ENCODE measurements at regions of chr12 and their contacts with region 1.

Region 1: DNA sequence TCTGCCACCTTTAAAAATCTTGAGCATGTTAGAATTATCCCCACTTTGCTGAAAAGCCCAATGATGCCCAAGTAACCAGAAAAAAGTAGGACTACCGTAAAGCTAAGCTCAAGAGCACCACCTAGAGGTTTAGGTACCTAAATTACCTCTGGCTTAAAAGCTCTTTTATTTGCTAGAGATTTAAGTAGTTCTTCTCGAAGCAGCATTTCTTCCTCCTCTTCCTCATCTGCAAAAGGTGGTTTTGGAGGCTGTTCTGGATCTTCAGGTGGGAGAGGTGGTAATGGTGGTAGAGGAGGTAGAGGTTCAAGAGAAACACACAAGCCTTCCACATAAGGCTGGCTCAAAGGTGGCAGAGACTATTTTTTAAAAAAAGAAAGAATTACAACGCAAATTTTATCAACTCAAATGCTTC is 26.9 kb downstream of the ZFC3H1 start:
- DNase-seq: peak in 5 of 35 experiments; percentile 6 to 78 (median 24)
- ATAC-seq: peak in 3 of 4 experiments; percentile 57 to 65 (median 58)
- H3K4me3 ChIP-seq: no peak overlapping the region
- H3K4me3 Mint-ChIP-seq: peak overlapping the region in 1 of 3 donors; percentile 10
- H3K27ac ChIP-seq: no peak overlapping the region
- H3K27ac Mint-ChIP-seq: peak overlapping the region; percentile 47 to 66
- H3K4me1 ChIP-seq: no peaks in the 10 kb centered on the region
- H3K4me1 Mint-ChIP-seq: peaks cover 10 to 14% (median 12%) of the 10 kb centered on the region in 3 donors
- H3K27me3 ChIP-seq: no peaks in the 10 kb centered on the region
- H3K27me3 Mint-ChIP-seq: no peaks in the 10 kb centered on the region

Region 2: DNA sequence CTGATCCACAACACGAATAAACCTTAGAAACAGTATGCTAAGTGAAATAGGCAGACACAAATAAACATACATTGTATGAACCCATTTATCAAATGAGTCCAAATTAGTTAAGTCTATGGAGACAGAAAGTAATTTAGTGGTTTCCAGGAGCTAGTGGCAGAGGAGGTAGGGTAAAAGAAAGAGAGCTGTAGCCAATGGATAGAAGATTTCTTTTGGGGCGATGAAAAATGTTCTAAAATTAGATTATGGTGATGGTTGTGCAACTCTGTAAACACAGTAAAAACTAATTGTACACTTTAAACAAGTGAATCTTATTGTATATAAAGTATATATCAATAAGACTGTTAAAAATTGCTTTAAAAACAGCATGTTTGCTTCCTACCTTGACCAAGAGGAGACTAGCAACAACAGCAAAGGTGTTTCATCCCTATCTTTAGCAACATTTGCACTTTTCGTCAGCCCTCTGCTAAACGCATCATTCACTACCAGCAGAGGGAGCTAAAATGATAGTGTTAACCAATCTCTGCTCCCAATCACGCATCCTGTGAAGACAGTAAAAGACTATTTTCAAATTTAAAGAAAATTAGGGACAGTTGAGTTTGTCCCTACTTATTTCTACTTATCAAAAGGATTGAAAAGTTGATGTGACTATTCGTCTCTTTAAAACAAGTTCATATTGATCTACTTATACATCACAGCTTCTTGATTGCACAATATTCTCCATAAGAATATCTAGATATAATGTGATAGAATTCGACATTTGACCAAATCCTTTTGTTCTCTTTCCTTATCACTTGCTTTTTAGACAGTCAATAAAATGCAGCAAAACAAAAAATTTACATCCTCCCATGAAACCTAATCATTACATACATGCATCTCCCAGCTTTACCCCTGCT is 221.1 kb before region 1 on chr12:
- CTCF ChIA-PET with region 1: interaction called in 1 of 2 experiments, 25 read pairs
- POLR2A ChIA-PET with region 1: no interaction called
- DNase-seq: peak in 5 of 35 experiments; percentile 10 to 70 (median 15)
- ATAC-seq: peak; percentile 52 to 70 (median 60)
- H3K4me3 ChIP-seq: no peak overlapping the region
- H3K4me3 Mint-ChIP-seq: no peak overlapping the region
- H3K27ac ChIP-seq: no peak overlapping the region
- H3K27ac Mint-ChIP-seq: no peak overlapping the region
- H3K4me1 ChIP-seq: no peaks in the 10 kb centered on the region
- H3K4me1 Mint-ChIP-seq: no peaks in the 10 kb centered on the region
- H3K27me3 ChIP-seq: no peaks in the 10 kb centered on the region
- H3K27me3 Mint-ChIP-seq: peaks cover 4 to 6% of the 10 kb centered on the region in 2 donors

Region 3: DNA sequence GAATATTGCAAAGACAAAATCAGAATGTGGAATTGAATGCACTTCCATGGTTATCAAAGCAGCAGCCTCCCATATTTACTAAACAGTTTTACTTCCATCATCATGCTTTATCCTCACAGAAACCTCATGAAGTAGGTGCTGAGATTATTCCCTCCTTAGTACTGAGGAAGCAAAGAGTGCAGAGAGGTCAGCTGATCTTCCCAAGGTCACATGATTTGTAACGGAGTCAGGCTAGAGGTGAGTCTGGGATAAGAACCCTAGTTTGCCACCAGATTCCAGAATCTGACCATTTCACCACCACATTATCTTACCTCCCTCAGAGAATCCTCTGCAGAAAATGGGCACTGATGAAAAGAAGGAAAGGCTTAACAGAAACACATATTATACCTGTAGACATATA is 95.1 kb before region 1 on chr12:
- CTCF ChIA-PET with region 1: no interaction called
- POLR2A ChIA-PET with region 1: no interaction called
- DNase-seq: no peak
- ATAC-seq: no peak
- H3K4me3 ChIP-seq: no peak overlapping the region
- H3K4me3 Mint-ChIP-seq: no peak overlapping the region
- H3K27ac ChIP-seq: no peak overlapping the region
- H3K27ac Mint-ChIP-seq: no peak overlapping the region
- H3K4me1 ChIP-seq: peaks cover 0 to under 1% of the 10 kb centered on the region in 2 experiments
- H3K4me1 Mint-ChIP-seq: no peaks in the 10 kb centered on the region
- H3K27me3 ChIP-seq: no peaks in the 10 kb centered on the region
- H3K27me3 Mint-ChIP-seq: no peaks in the 10 kb centered on the region

Region 4: DNA sequence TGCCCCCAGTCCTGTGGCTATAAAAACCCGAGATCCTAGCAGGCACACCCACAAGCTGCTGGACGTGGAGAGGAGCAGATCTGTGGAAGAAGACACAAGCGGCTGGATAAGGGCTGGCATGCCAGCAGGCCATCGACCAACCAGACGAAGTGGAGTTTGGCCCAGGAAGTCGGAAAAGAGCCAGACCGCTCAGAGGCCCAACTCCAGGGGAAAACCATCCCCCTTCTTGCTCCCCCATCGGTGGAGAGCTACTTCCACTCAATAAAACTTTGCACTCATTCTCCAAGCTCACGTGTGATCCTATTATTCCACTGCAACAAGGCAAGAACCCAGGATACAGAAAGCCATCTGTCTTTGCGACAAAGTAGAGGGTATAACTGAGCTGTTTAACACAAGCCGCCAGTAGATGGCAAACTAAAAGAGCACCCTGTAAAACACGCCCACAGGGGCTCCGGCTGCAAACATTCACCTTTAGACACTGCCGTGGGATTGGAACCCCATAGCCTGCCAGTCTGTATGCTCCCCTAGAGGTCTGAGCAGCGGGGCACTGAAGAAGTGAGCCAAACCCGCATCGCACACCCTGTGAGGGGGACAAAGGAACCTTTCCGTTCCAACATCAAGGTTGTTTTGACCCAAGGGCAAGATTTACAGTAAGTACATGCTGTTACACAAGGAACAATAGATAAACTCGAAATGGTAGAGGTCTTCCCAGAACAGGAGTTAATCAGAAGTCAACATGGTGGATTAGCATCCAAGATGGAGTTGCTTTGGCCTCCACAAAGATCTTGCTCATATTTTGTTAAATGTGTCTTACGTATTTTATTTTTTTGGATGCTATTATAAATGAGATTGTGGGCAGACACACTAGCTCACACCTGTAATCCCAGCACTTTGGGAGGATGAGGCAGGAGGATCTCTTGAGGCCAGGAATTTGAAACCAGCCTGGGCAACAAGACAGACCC is 95.3 kb after region 1 on chr12:
- CTCF ChIA-PET with region 1: no interaction called
- POLR2A ChIA-PET with region 1: no interaction called
- DNase-seq: no peak
- ATAC-seq: no peak
- H3K4me3 ChIP-seq: no peak overlapping the region
- H3K4me3 Mint-ChIP-seq: no peak overlapping the region
- H3K27ac ChIP-seq: no peak overlapping the region
- H3K27ac Mint-ChIP-seq: no peak overlapping the region
- H3K4me1 ChIP-seq: no peaks in the 10 kb centered on the region
- H3K4me1 Mint-ChIP-seq: no peaks in the 10 kb centered on the region
- H3K27me3 ChIP-seq: peaks cover 0 to 3% of the 10 kb centered on the region in 2 experiments
- H3K27me3 Mint-ChIP-seq: no peaks in the 10 kb centered on the region